ENCODE measurements at regions of chr12 and their contacts with region 1.

Region 1: GRCh38 chr12:96343347-96343954 is 56.8 kb downstream of the CDK17 start:
- DNase-seq: no peak
- H3K4me3 ChIP-seq: no peak overlapping the region
- H3K27ac ChIP-seq: no peak overlapping the region
- H3K4me1 ChIP-seq: peaks cover 3% of the 10 kb centered on the region
- H3K27me3 ChIP-seq: no peaks in the 10 kb centered on the region
- CTCF ChIP-seq: no peak
- EP300 ChIP-seq: no peak
- POLR2A ChIP-seq: no peak

Region 2: GRCh38 chr12:94769776-94770759 is 1573.4 kb before region 1 on chr12:
- intact Hi-C with region 1: loop called in 1 of 4 experiments (anchors 5 kb)
- DNase-seq: no peak
- H3K4me3 ChIP-seq: no peak overlapping the region
- H3K27ac ChIP-seq: no peak overlapping the region
- H3K4me1 ChIP-seq: peaks cover 1% of the 10 kb centered on the region
- H3K27me3 ChIP-seq: no peaks in the 10 kb centered on the region
- CTCF ChIP-seq: no peak
- EP300 ChIP-seq: no peak
- POLR2A ChIP-seq: no peak

Measured in ovary (tissue), 10 donors.